Ovary (tissue), 10 donors: ENCODE measurements at regions of chr6 and their contacts with region 1.

Region 1: DNA sequence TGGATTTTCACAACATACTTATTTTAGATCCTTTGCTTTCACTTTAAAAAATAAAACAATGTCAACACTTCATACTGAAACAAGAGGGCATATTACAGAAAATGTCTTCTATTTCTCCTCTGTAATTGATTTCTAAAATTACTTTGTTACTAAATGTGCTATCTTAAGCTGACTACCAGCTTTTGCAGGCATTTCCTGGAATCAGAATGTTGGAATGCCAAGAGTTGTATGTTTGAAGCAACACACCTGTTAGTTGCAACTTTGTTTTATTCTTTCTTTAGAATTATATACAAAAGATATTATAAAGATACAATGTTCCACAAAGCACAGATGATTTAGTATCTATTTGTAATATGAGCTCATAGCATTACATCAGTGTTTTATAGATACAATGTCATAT is 62.5 kb upstream of the TMEM170B start:
- DNase-seq: no peak
- H3K4me3 ChIP-seq: no peak overlapping the region
- H3K27ac ChIP-seq: no peak overlapping the region
- H3K4me1 ChIP-seq: peaks cover 7% of the 10 kb centered on the region
- H3K27me3 ChIP-seq: no peaks in the 10 kb centered on the region
- CTCF ChIP-seq: no peak
- EP300 ChIP-seq: no peak
- POLR2A ChIP-seq: no peak

Region 2: GRCh38 chr6:10429638-10430427 is 1045.2 kb before region 1 on chr6:
- intact Hi-C with region 1: loop called in 1 of 4 experiments (anchors 5 kb)
- DNase-seq: no peak
- H3K4me3 ChIP-seq: no peak overlapping the region
- H3K27ac ChIP-seq: no peak overlapping the region
- H3K4me1 ChIP-seq: peaks cover 3% of the 10 kb centered on the region
- H3K27me3 ChIP-seq: no peaks in the 10 kb centered on the region
- CTCF ChIP-seq: no peak
- EP300 ChIP-seq: no peak
- POLR2A ChIP-seq: no peak

Region 3: DNA sequence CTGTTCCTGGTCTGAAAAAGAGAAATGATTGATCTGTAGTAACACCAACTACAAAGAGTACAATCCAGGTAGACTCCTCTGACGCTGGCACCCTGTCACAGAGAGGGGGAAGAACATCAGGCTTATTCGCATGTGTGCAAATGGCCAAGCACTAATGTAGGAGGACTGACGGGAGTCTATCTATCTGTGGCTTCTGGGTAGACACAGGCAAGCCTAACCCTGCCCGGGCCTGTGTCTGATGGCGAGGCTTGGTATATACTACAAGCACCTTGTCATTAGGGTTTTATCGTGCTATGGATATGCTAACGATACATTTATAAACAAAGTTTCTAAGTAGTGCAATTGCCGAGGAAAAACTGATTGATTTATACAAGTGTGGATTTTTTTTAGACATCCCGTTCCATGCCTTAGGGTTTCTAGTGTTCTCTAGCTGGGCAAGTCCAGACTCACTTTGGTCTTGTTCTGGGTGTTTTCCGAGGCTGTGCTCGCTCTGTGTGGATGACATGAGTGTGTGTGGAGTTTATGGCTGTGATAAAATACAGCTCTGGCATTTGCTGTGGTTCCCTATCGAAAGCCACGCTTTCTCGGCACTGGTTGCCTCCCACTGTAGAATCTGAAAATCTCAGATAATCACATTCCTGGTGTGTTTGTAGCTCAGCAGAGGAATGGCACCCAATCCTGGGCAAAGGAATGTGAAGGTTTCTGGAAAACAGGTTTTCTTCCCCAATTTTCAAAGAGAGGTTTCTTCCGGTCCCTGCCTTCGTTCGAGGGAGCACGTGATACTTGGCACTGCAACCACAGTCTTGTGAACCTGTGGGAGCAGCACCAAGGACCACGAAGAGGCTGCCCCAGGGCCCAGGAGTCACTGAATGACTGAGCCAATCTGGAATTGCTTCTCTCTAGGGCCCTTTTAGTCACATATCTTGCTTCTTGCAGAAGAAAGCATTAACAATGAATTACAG is 747.7 kb after region 1 on chr6:
- intact Hi-C with region 1: no loop called
- DNase-seq: no peak
- H3K4me3 ChIP-seq: no peak overlapping the region
- H3K27ac ChIP-seq: no peak overlapping the region
- H3K4me1 ChIP-seq: no peaks in the 10 kb centered on the region
- H3K27me3 ChIP-seq: no peaks in the 10 kb centered on the region
- CTCF ChIP-seq: no peak
- EP300 ChIP-seq: no peak
- POLR2A ChIP-seq: no peak